Activated CD4-positive, alpha-beta memory T cell treated with anti-CD3 and anti-CD28 coated beads for 36 hours (primary cell): ENCODE measurements at regions of chr1 and their contacts with region 1.

Region 1: GRCh38 chr1:37602750-37603694 is 7.3 kb upstream of the GNL2 start:
- DNase-seq: peak; percentile 46
- H3K4me3 Mint-ChIP-seq: no peak overlapping the region
- H3K27ac Mint-ChIP-seq: no peak overlapping the region
- H3K4me1 Mint-ChIP-seq: no peaks in the 10 kb centered on the region
- H3K27me3 Mint-ChIP-seq: no peaks in the 10 kb centered on the region

Region 2: GRCh38 chr1:37588939-37589338 is 14.1 kb before region 1 on chr1:
- CTCF ChIA-PET with region 1: interaction called, 18 read pairs
- POLR2A ChIA-PET with region 1: no interaction called
- intact Hi-C with region 1: no loop called
- DNase-seq: no peak
- H3K4me3 Mint-ChIP-seq: no peak overlapping the region
- H3K27ac Mint-ChIP-seq: peak overlapping the region; percentile 49
- H3K4me1 Mint-ChIP-seq: peaks cover 31% of the 10 kb centered on the region
- H3K27me3 Mint-ChIP-seq: no peaks in the 10 kb centered on the region

Region 3: DNA sequence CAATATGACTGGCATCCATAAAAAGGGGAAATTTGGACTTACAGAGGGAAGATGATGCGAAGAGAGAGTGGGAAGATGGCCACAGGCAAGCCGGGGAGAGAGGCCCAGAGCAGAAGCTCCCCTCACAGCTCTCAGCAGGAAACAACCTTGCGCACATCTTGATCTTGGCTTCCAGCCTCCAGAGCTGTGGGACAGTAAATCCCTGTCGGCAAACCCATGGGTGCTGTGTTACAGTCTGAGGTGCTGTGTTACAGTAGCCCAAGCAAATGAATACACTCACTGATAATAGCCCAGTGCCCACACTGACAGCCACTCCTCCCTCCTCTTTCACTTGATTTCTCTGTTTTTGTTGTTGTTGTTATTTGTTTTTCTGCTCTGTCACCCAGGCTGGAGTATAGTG is 111.7 kb after region 1 on chr1:
- CTCF ChIA-PET with region 1: no interaction called
- POLR2A ChIA-PET with region 1: no interaction called
- intact Hi-C with region 1: no loop called
- DNase-seq: no peak
- H3K4me3 Mint-ChIP-seq: no peak overlapping the region
- H3K27ac Mint-ChIP-seq: no peak overlapping the region
- H3K4me1 Mint-ChIP-seq: no peaks in the 10 kb centered on the region
- H3K27me3 Mint-ChIP-seq: no peaks in the 10 kb centered on the region

Region 4: GRCh38 chr1:37793773-37794371 is 190.8 kb after region 1 on chr1 and contains the start of gene MANEAL:
- CTCF ChIA-PET with region 1: no interaction called
- POLR2A ChIA-PET with region 1: no interaction called
- intact Hi-C with region 1: no loop called
- DNase-seq: peak; percentile 49
- H3K4me3 Mint-ChIP-seq: peak within 1 kb of the TSS; percentile 59
- H3K27ac Mint-ChIP-seq: no peak within 1 kb of the TSS
- H3K4me1 Mint-ChIP-seq: peaks cover 19% of the 10 kb centered on the region
- H3K27me3 Mint-ChIP-seq: peaks cover 23% of the 10 kb centered on the region
- total RNA-seq, gene MANEAL: 1.5 TPM